Activated T-helper 1 cell treated with anti-CD3 and anti-CD28 coated beads, Interleukin-12 subunit alpha, Interleukin-12 subunit beta, Interleukin-2, Interleukin-4 antibody, amounts not matched to agents 30 ng/mL and 10 ng/mL and 1 ng/mL, durations not matched to agents 14 hours and 24 hours and 36 hours (primary cell): ENCODE measurements at regions of chr6 and their contacts with region 1.

Region 1: GRCh38 chr6:15299430-15300131 is 53.7 kb downstream of the JARID2 start:
- DNase-seq: no peak
- H3K4me3 Mint-ChIP-seq: peak overlapping the region; percentile 69
- H3K27ac Mint-ChIP-seq: peak overlapping the region; percentile 69
- H3K4me1 Mint-ChIP-seq: peaks cover 82% of the 10 kb centered on the region
- H3K27me3 Mint-ChIP-seq: no peaks in the 10 kb centered on the region

Region 2: GRCh38 chr6:15090145-15090579 is 209.4 kb before region 1 on chr6:
- intact Hi-C with region 1: no loop called
- DNase-seq: no peak
- H3K4me3 Mint-ChIP-seq: no peak overlapping the region
- H3K27ac Mint-ChIP-seq: no peak overlapping the region
- H3K4me1 Mint-ChIP-seq: no peaks in the 10 kb centered on the region
- H3K27me3 Mint-ChIP-seq: peaks cover 3% of the 10 kb centered on the region

Region 3: GRCh38 chr6:15254070-15254841 is 45.3 kb before region 1 on chr6:
- intact Hi-C with region 1: loop called (anchors 1 kb)
- DNase-seq: no peak
- H3K4me3 Mint-ChIP-seq: peak overlapping the region; percentile 41
- H3K27ac Mint-ChIP-seq: peak overlapping the region; percentile 92
- H3K4me1 Mint-ChIP-seq: peaks cover 98% of the 10 kb centered on the region
- H3K27me3 Mint-ChIP-seq: no peaks in the 10 kb centered on the region

Region 4: GRCh38 chr6:15317934-15318902 is 18.6 kb after region 1 on chr6:
- intact Hi-C with region 1: loop called (anchors 1 kb)
- DNase-seq: no peak
- H3K4me3 Mint-ChIP-seq: peak overlapping the region; percentile 43
- H3K27ac Mint-ChIP-seq: peak overlapping the region; percentile 85
- H3K4me1 Mint-ChIP-seq: peaks cover 94% of the 10 kb centered on the region
- H3K27me3 Mint-ChIP-seq: no peaks in the 10 kb centered on the region

Region 5: GRCh38 chr6:15512126-15512525 is 212.5 kb after region 1 on chr6:
- intact Hi-C with region 1: no loop called
- DNase-seq: no peak
- H3K4me3 Mint-ChIP-seq: no peak overlapping the region
- H3K27ac Mint-ChIP-seq: no peak overlapping the region
- H3K4me1 Mint-ChIP-seq: peaks cover 5% of the 10 kb centered on the region
- H3K27me3 Mint-ChIP-seq: no peaks in the 10 kb centered on the region